ENCODE measurements at regions of chr10 and their contacts with region 1.

Region 1: GRCh38 chr10:73625884-73626752 is 15.2 kb downstream of the MYOZ1 start:
- DNase-seq: peak; percentile 74 to 98 (median 93)
- ATAC-seq: peak; percentile 95 to 97 (median 97)
- H3K4me3 ChIP-seq: peak overlapping the region; percentile 62 to 96
- H3K4me3 Mint-ChIP-seq: peak overlapping the region; percentile 81 to 96 (median 92)
- H3K27ac ChIP-seq: peak overlapping the region; percentile 72
- H3K27ac Mint-ChIP-seq: peak overlapping the region; percentile 97
- H3K4me1 ChIP-seq: peaks cover 8 to 17% of the 10 kb centered on the region in 2 experiments
- H3K4me1 Mint-ChIP-seq: peaks cover 5 to 26% (median 20%) of the 10 kb centered on the region in 3 donors
- H3K27me3 ChIP-seq: no peaks in the 10 kb centered on the region
- H3K27me3 Mint-ChIP-seq: no peaks in the 10 kb centered on the region

Region 2: GRCh38 chr10:73609116-73609515 is 17.0 kb before region 1 on chr10:
- CTCF ChIA-PET with region 1: interaction called, 4 to 5 read pairs
- POLR2A ChIA-PET with region 1: interaction called in 1 of 2 experiments, 11 read pairs
- DNase-seq: no peak
- ATAC-seq: no peak
- H3K4me3 ChIP-seq: no peak overlapping the region
- H3K4me3 Mint-ChIP-seq: no peak overlapping the region
- H3K27ac ChIP-seq: no peak overlapping the region
- H3K27ac Mint-ChIP-seq: no peak overlapping the region
- H3K4me1 ChIP-seq: no peaks in the 10 kb centered on the region
- H3K4me1 Mint-ChIP-seq: no peaks in the 10 kb centered on the region
- H3K27me3 ChIP-seq: no peaks in the 10 kb centered on the region
- H3K27me3 Mint-ChIP-seq: no peaks in the 10 kb centered on the region

Measured in T-cell (primary cell).